Caco-2 (cell line): ENCODE measurements at regions of chr19 and their contacts with region 1.

Region 1: DNA sequence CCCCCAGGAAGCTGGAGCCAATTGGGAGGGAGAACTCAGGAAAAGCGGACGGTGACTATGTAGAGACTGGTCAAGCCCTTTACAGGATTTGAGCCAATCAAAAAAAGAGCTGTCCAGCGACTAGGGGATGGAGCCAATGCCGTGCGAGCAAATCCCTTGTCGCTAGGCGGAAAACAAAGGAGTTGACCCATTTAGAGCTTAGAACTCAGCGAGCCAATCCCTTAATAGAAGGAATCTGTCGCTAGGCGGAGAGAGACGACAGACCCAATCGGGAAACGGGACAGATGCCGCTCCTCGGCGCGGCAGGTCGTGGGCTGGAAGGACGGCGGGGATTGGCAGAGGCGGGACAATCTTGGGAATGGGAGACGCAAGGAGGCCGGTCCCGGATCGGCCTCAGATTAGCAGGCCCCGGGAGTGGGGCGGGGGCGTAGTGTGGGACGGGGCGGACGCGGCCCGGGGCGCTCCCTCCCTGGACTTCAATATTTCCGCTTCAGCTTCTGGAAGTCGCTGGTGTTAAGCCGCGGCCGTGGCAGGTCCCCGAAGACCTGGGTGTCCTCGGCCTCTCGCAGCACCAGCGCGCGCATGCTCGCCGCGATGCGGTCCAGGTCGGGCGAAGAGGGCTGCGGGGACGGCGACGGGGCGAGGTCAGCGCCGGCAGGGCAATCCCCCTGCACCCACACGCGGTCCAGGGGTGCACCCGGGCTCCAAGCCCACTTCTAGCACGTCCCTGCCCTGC is 2.2 kb upstream of the PNKP start:
- DNase-seq: peak; percentile 98
- H3K4me3 ChIP-seq: peak overlapping the region; percentile 69
- H3K4me3 Mint-ChIP-seq: no peak overlapping the region
- H3K27ac Mint-ChIP-seq: no peak overlapping the region
- H3K4me1 ChIP-seq: peaks cover 22% of the 10 kb centered on the region
- H3K4me1 Mint-ChIP-seq: peaks cover 21% of the 10 kb centered on the region
- H3K27me3 ChIP-seq: no peaks in the 10 kb centered on the region
- H3K27me3 Mint-ChIP-seq: no peaks in the 10 kb centered on the region
- CTCF ChIP-seq: peak in 1 of 2 experiments; percentile 19

Region 2: DNA sequence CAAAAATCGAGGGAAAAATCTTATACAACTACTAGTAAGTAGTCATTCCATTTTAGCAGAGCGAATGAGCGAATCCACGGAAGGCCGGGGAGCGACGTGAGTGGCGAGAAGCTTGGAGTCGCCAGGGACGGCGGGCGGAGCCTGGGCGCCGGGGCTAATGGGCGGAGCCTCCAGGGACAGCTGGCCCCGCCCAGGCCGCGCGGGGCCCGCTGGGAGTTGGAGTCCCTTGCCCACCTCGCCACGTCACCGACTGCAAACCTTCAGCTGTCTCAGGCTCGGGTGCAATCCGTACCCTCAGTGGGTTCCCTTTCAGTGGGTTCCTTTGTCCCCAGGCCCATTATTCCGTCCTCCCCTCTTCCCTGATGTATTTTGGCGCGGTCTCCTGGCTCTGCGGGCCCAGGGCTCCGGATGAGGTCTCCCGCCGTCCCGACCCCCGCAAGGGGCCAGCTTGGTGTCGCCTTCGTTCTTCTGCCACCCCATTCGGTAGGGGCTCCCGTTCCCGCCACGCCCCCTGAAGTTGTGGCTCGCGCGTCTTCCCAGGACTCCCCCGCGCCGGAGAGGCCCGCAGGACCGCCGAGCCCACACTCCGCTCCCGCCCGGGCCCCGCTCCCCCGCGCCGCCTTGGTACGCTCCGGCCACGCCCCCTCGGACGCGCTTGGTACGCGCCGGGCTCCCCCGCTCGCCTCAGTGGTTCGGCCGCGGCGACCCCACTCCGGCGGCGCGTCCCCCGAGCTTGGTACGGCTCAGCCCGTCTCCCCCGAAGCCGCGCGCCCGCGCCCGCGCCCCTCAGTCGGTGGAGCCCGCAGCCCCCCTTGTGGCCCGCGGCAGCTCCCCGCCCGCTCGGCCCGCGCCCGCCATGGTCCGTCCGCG is 18.9 kb before region 1 on chr19 and contains the start of gene PTOV1:
- CTCF ChIA-PET with region 1: interaction called, 7 read pairs
- POLR2A ChIA-PET with region 1: interaction called, 17 read pairs
- intact Hi-C with region 1: loop called (anchors 1 kb)
- DNase-seq: peak; percentile 94 to 96
- H3K4me3 ChIP-seq: peak within 1 kb of the TSS; percentile 73
- H3K4me3 Mint-ChIP-seq: peak within 1 kb of the TSS; percentile 82
- H3K27ac Mint-ChIP-seq: peak within 1 kb of the TSS; percentile 97
- H3K4me1 ChIP-seq: peaks cover 14% of the 10 kb centered on the region
- H3K4me1 Mint-ChIP-seq: peaks cover 17% of the 10 kb centered on the region
- H3K27me3 ChIP-seq: no peaks in the 10 kb centered on the region
- H3K27me3 Mint-ChIP-seq: no peaks in the 10 kb centered on the region
- CTCF ChIP-seq: no peak
- total RNA-seq, gene PTOV1: 209 and 224 TPM in 2 replicates

Region 3: DNA sequence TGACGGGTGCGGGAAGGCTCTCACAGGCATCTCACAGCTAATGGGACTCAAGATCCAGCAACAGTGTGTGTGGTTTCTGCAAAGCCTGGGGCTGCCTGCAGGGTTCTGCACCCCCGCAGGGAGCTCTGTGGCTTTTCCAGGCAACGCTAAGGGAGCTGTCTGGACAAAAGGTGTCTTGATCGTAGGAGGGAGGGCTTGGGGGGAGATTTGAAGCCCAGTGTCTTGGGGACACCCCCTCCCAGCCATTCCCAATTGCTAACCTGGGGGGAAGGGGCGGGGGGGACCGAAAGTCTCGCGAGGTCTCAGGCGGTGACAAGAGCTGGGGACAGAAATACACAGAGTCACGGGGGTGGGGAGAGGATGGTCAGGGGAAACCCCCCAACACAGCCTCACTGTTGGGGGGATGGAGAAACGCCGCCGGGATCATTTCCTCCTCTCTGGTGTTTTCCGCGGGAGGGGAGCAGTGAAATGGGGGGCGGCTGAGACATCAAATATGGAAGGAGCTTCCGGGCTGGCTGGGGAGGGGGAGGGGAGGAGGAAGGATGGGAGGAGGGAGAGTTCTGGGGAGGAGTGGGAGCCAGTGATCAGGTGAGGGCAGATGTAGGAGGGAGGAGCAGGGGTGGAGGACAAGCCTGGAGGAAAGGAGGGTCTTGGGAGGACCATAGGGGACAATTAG is 446.3 kb after region 1 on chr19:
- CTCF ChIA-PET with region 1: no interaction called
- POLR2A ChIA-PET with region 1: no interaction called
- intact Hi-C with region 1: loop called (anchors 10 kb)
- DNase-seq: peak; percentile 58 to 68
- H3K4me3 ChIP-seq: peak overlapping the region; percentile 40
- H3K4me3 Mint-ChIP-seq: peak overlapping the region; percentile 75
- H3K27ac Mint-ChIP-seq: peak overlapping the region; percentile 14
- H3K4me1 ChIP-seq: peaks cover 11% of the 10 kb centered on the region; the same call in 1 of the 2 replicates
- H3K4me1 Mint-ChIP-seq: peaks cover 17% of the 10 kb centered on the region
- H3K27me3 ChIP-seq: no peaks in the 10 kb centered on the region; the same call in 1 of the 2 replicates
- H3K27me3 Mint-ChIP-seq: peaks cover 9% of the 10 kb centered on the region
- CTCF ChIP-seq: no peak